OCI-LY7 (cell line): ENCODE measurements at regions of chr3 and their contacts with region 1.

Region 1: GRCh38 chr3:52934630-52935530 is 37.5 kb upstream of the STIMATE start:
- DNase-seq: peak; percentile 71
- H3K4me3 ChIP-seq: no peak overlapping the region
- H3K27ac ChIP-seq: no peak overlapping the region
- H3K4me1 ChIP-seq: peaks cover 9% of the 10 kb centered on the region
- CTCF ChIP-seq: peak; percentile 94

Region 2: DNA sequence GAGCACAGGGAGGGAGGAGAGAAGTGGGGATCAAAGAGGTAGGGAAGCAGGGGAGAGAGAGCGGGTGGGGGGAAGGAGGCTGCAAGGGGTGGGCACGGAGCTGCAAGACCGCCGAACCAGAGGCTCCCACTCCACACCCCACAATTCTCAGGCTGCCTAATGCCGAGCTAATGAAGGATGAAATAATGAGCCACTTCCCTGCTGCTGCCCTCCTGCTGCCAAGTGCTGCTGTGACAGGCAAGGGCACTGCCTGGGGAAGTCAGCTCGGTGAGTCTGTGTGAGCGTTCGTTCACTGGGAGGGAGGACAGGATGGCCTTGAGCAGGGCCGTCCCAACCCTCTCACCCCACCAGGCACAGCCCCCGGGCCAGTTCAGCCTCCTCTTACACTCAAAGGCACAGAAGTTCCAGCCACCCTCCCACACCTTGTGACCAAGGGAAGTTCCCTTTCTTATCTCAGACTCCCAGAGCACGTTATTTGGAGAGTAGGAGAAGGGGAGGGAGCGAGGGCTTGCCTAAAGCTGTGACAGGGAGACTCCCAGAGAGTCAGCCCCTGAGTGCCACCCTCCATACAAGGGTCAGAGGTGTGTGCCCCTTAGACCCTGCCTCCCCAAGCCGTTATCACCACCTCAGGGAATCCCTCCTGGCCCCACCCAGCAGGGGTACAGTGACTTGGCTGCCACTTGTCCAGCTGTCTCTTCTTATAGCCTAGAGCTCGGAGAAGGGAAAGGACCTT is 634.8 kb before region 1 on chr3:
- CTCF ChIA-PET with region 1: no interaction called
- POLR2A ChIA-PET with region 1: no interaction called
- intact Hi-C with region 1: no loop called
- DNase-seq: peak; percentile 17
- H3K4me3 ChIP-seq: no peak overlapping the region
- H3K27ac ChIP-seq: no peak overlapping the region
- H3K4me1 ChIP-seq: no peaks in the 10 kb centered on the region
- CTCF ChIP-seq: no peak

Region 3: GRCh38 chr3:52851348-52851747 is 83.5 kb before region 1 on chr3:
- CTCF ChIA-PET with region 1: no interaction called
- POLR2A ChIA-PET with region 1: interaction called, 3 read pairs
- intact Hi-C with region 1: loop called (anchors 1 kb)
- DNase-seq: peak; percentile 60
- H3K4me3 ChIP-seq: no peak overlapping the region
- H3K27ac ChIP-seq: no peak overlapping the region
- H3K4me1 ChIP-seq: no peaks in the 10 kb centered on the region
- CTCF ChIP-seq: peak; percentile 81

Region 4: DNA sequence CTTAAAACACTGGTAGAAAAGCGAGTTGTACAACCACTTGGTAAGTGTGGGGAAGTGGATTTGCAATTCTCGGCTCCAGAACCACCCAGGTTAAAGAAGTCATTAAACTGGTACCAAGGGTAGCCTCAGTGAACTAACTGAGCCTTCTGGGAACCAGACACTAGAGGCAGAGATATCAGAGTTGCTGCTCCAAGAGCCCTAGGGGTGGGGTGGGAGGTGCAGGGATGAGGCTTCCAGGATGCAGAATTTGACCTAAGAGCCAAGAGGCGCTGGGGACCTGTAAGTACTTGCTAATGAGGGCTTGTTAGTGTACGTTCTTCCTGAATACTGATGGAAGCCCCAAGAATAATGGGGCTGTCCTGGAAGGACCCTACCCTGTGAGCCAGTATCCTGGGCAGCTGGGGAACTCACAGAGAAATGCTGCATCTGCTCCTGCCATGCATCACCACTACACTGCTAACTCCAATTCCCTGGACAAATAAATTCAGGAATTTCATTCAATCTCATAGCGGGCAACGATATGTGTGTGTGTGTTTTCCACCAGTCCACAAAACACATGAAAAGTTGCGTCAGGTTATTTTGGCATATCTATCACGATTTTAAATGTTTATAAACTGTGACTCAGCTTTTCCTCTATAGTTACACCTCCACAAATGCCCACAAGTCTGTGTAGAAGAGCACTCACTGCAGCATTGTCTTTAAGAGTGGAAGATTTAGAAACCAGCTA is 61.3 kb before region 1 on chr3:
- CTCF ChIA-PET with region 1: no interaction called
- POLR2A ChIA-PET with region 1: no interaction called
- intact Hi-C with region 1: no loop called
- DNase-seq: no peak
- H3K4me3 ChIP-seq: no peak overlapping the region
- H3K27ac ChIP-seq: no peak overlapping the region
- H3K4me1 ChIP-seq: no peaks in the 10 kb centered on the region
- CTCF ChIP-seq: no peak

Region 5: DNA sequence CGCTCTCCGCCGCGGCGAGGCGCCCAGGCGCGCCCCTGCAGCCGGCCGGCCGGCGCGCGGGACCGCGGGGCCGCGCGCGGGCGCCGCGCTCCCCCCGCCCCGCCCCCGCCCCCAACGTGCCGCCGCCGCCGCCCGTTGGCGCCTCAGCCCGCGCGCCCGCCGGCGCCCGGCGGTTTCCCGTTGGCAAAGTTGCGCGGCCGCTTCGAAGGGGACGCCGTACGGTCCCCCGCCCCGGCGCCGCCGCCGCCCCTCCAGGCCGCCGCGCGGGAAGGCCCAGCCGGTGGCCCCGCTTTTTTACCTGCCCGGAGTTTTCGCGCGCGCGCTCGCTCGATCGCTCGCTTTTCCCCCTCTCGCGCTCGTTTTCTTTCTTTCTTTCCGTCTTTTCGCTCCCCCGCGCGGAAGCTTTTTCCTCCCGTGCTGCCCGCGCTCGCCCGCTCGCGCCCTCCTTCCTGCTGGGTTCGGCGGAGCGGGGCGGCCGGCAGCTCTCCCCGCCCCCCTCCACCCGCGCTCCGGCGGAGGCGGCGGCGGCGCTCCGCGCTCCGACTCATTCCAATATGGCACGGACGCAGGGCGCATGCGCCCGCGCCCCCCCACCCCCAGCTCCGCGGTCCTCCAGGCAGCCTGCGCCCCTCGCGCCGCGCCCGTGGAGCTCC is 110.8 kb after region 1 on chr3 and contains the start of gene SFMBT1:
- CTCF ChIA-PET with region 1: no interaction called
- POLR2A ChIA-PET with region 1: interaction called, 4 read pairs
- intact Hi-C with region 1: loop called (anchors 10 kb)
- DNase-seq: peak; percentile 82
- H3K4me3 ChIP-seq: peak within 1 kb of the TSS; percentile 85
- H3K27ac ChIP-seq: peak within 1 kb of the TSS; percentile 55
- H3K4me1 ChIP-seq: peaks cover 22% of the 10 kb centered on the region
- CTCF ChIP-seq: no peak
- total RNA-seq, gene SFMBT1: 8.0 and 18.1 TPM in 2 replicates

Region 6: GRCh38 chr3:53236112-53236841 is 301.4 kb after region 1 on chr3:
- CTCF ChIA-PET with region 1: no interaction called
- POLR2A ChIA-PET with region 1: no interaction called
- intact Hi-C with region 1: no loop called
- DNase-seq: no peak
- H3K4me3 ChIP-seq: no peak overlapping the region
- H3K27ac ChIP-seq: peak overlapping the region; percentile 26
- H3K4me1 ChIP-seq: peaks cover 6% of the 10 kb centered on the region
- CTCF ChIP-seq: no peak